Activated CD4-positive, alpha-beta memory T cell treated with anti-CD3 and anti-CD28 coated beads for 36 hours (primary cell): ENCODE measurements at regions of chr13 and their contacts with region 1.

Region 1: GRCh38 chr13:28819735-28820098 is 422 bp upstream of the MTUS2 start:
- DNase-seq: peak; percentile 66
- H3K4me3 Mint-ChIP-seq: no peak overlapping the region
- H3K27ac Mint-ChIP-seq: no peak overlapping the region
- H3K4me1 Mint-ChIP-seq: peaks cover 3% of the 10 kb centered on the region
- H3K27me3 Mint-ChIP-seq: peaks cover 51% of the 10 kb centered on the region

Region 2: GRCh38 chr13:28976195-28976594 is 156.5 kb after region 1 on chr13:
- CTCF ChIA-PET with region 1: no interaction called
- POLR2A ChIA-PET with region 1: no interaction called
- intact Hi-C with region 1: no loop called
- DNase-seq: no peak
- H3K4me3 Mint-ChIP-seq: no peak overlapping the region
- H3K27ac Mint-ChIP-seq: no peak overlapping the region
- H3K4me1 Mint-ChIP-seq: no peaks in the 10 kb centered on the region
- H3K27me3 Mint-ChIP-seq: peaks cover 2% of the 10 kb centered on the region

Region 3: GRCh38 chr13:29362849-29363604 is 543.3 kb after region 1 on chr13:
- CTCF ChIA-PET with region 1: interaction called, 6 read pairs
- POLR2A ChIA-PET with region 1: no interaction called
- intact Hi-C with region 1: loop called (anchors 1 kb)
- DNase-seq: peak; percentile 49
- H3K4me3 Mint-ChIP-seq: no peak overlapping the region
- H3K27ac Mint-ChIP-seq: no peak overlapping the region
- H3K4me1 Mint-ChIP-seq: no peaks in the 10 kb centered on the region
- H3K27me3 Mint-ChIP-seq: peaks cover 8% of the 10 kb centered on the region

Region 4: GRCh38 chr13:29707876-29708543 is 888.3 kb after region 1 on chr13:
- CTCF ChIA-PET with region 1: no interaction called
- POLR2A ChIA-PET with region 1: no interaction called
- intact Hi-C with region 1: loop called (anchors 10 kb)
- DNase-seq: peak; percentile 63
- H3K4me3 Mint-ChIP-seq: no peak overlapping the region
- H3K27ac Mint-ChIP-seq: no peak overlapping the region
- H3K4me1 Mint-ChIP-seq: no peaks in the 10 kb centered on the region
- H3K27me3 Mint-ChIP-seq: peaks cover 6% of the 10 kb centered on the region